Adrenal gland (tissue), 19 donors: ENCODE measurements at regions of chr12 and their contacts with region 1.

Region 1: DNA sequence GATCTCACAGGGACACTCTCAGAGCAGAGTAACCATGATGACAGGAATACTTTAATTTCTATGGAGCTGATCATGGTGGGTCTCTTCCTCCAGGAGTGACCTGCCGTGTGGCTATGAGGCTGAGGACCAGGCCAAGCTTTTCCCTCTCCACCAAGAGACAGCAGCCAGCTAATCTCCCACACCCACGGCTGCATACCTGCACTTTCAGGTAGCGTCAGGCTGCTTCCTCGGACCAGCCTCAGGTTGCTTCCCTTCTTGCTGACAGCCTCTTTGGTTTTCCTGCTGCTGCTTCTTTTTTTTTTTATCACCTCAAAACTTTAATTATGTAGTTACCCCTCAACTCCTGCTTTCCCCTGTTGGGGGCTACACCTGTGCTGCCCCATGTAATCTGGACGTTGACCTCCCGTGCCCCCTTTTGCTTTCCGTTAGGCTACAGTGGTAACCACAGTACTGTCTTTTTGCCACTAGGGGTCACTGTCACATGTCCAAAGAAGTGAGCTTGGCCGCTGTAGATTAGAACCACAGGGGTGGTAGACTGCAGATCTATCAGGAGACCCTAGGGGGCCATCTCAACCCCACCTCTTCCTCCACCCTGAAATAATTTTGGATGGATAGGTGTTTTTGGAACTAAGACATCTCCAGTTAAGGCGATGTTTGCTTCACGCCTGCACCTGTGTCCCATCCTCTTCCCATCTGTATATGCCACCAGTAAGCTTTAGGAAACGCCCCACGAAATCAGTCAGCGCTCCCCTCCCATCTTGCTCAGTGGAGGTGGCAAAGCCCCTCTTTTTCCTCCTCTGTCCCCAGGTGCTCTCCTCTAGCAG is 7.8 kb upstream of the PIP4K2C start:
- DNase-seq: peak; percentile 62 to 84 (median 70)
- H3K4me3 ChIP-seq: no peak overlapping the region
- H3K27ac ChIP-seq: no peak overlapping the region
- H3K4me1 ChIP-seq: no peaks in the 10 kb centered on the region
- H3K27me3 ChIP-seq: peaks cover 5% of the 10 kb centered on the region
- CTCF ChIP-seq: peak; percentile 87 to 96 (median 94)
- POLR2A ChIP-seq: no peak

Region 2: GRCh38 chr12:57621497-57622292 is 38.5 kb after region 1 on chr12:
- intact Hi-C with region 1: loop called (anchors 2 kb)
- DNase-seq: peak in 6 of 7 donors; percentile 47 to 65 (median 59)
- H3K4me3 ChIP-seq: peak overlapping the region in 1 of 4 donors; percentile 44
- H3K27ac ChIP-seq: no peak overlapping the region
- H3K4me1 ChIP-seq: peaks cover 6 to 15% of the 10 kb centered on the region in 2 donors
- H3K27me3 ChIP-seq: peaks cover 45% of the 10 kb centered on the region
- CTCF ChIP-seq: peak; percentile 82 to 93 (median 92)
- POLR2A ChIP-seq: no peak